B cell (primary cell): ENCODE measurements at regions of chr11 and their contacts with region 1.

Region 1: DNA sequence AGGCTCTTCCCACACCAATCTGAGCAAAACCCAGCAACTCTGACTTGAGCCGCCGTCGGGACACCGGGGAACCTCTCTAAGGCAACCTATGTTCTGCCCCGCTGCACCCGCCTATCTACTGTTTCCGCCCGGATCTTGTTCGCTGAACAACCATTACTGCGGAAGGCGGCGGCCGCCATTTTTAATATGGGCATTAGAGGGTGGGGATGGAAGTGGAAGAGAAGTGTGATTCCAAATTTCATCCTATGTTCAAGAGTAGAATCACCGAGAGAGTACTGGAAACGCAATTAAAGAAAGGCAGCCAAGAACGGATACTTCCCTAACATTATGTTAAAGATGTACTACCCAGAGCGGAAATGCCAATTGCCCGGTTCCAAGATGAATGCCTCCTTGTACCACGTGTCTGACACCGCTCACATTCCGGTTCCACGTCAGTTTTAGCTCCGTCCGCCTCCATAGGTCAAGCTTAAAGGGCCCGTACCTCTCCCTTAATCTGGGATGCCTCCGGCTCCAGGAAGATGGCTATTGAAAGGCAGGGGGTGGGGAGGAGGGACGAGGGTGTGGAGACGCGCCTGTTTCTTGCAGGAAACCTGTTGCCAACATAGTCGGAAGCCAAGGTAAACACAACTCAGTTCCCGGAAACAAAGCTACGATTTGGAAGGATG is at the start of gene DPAGT1:
- DNase-seq: peak; percentile 93
- ATAC-seq: peak; percentile 84
- H3K4me3 ChIP-seq: peak within 1 kb of the TSS; percentile 75 to 100 (median 89)
- H3K4me3 Mint-ChIP-seq: peak within 1 kb of the TSS; percentile 93
- H3K27ac ChIP-seq: peak within 1 kb of the TSS; percentile 88 to 91
- H3K27ac Mint-ChIP-seq: peak within 1 kb of the TSS; percentile 98
- H3K4me1 ChIP-seq: peaks cover 33 to 46% of the 10 kb centered on the region in 2 donors
- H3K4me1 Mint-ChIP-seq: peaks cover 61% of the 10 kb centered on the region
- H3K27me3 ChIP-seq: no peaks in the 10 kb centered on the region
- H3K27me3 Mint-ChIP-seq: no peaks in the 10 kb centered on the region
- CTCF ChIP-seq: no peak
- total RNA-seq, gene DPAGT1: 34.5 and 38.3 TPM in 2 replicates

Region 2: DNA sequence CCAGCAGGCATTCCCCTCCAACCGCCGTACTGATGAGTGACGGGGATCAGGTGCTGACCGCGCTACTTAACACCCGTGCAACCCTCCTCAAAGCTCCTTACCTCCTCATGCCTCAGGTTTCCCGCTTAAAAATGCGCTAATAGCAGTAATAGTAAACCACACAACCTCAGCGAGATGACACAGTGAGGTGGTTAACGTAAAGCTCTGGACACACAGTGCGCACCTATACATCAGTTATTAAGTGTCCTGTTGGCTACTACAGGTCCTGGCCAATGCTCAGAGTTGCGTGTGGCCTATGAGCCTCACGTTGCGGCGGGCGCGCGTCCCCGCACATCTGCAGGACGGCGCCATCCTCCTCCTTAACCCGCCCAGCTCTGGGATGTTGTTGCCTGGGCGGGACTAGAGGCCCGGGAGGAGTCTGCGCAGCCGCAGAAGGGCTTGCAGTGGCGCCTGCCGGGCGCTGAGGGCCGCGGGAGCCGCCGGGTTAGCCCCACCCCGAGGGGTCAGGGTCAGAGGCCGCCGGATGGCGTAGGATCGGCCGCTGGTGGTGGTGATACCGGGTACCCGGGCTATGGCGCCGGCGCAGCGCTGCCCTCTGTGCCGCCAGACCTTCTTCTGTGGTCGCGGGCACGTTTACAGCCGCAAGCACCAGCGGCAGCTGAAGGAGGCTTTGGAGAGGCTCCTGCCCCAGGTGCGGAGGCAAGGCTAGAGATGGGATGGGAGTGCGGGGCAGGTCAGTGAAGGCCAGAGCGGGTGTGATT is 104.1 kb before region 1 on chr11 and contains the start of gene CENATAC:
- CTCF ChIA-PET with region 1: no interaction called
- POLR2A ChIA-PET with region 1: interaction called, 4 read pairs
- intact Hi-C with region 1: loop called (anchors 1 kb)
- DNase-seq: peak; percentile 94
- ATAC-seq: peak; percentile 95
- H3K4me3 ChIP-seq: peak within 1 kb of the TSS; percentile 76 to 90 (median 82)
- H3K4me3 Mint-ChIP-seq: peak within 1 kb of the TSS; percentile 99
- H3K27ac ChIP-seq: peak within 1 kb of the TSS; percentile 52 to 77
- H3K27ac Mint-ChIP-seq: peak within 1 kb of the TSS; percentile 94
- H3K4me1 ChIP-seq: peaks cover 17 to 22% of the 10 kb centered on the region in 2 donors
- H3K4me1 Mint-ChIP-seq: peaks cover 35% of the 10 kb centered on the region
- H3K27me3 ChIP-seq: no peaks in the 10 kb centered on the region
- H3K27me3 Mint-ChIP-seq: no peaks in the 10 kb centered on the region
- CTCF ChIP-seq: no peak
- total RNA-seq, gene CENATAC: 122 and 138 TPM in 2 replicates

Region 3: DNA sequence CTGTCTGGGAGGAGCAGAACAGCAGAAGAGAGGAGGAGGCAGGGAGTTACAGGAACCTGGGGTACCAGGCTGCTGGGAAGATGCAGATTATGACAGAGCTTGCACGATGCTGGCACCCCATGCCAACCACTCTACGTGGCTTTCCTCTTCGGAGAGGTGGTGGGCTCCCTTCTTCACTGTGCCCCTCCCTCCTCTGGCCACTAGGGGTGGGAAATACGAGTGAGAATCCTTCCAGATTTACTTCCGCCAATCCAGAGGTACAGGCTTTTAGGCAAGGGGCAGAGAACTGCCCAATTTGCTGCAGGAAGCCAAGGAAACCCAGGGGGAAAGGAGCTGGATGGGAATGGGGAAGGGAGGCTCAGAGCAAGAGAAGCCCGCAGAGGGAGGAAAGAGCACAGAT is 57.2 kb before region 1 on chr11:
- CTCF ChIA-PET with region 1: no interaction called
- POLR2A ChIA-PET with region 1: interaction called, 13 read pairs
- intact Hi-C with region 1: no loop called
- DNase-seq: no peak
- ATAC-seq: no peak
- H3K4me3 ChIP-seq: no peak overlapping the region
- H3K4me3 Mint-ChIP-seq: no peak overlapping the region
- H3K27ac ChIP-seq: no peak overlapping the region
- H3K27ac Mint-ChIP-seq: no peak overlapping the region
- H3K4me1 ChIP-seq: peaks cover 0 to 2% of the 10 kb centered on the region in 2 donors
- H3K4me1 Mint-ChIP-seq: peaks cover under 1% of the 10 kb centered on the region
- H3K27me3 ChIP-seq: no peaks in the 10 kb centered on the region
- H3K27me3 Mint-ChIP-seq: no peaks in the 10 kb centered on the region
- CTCF ChIP-seq: peak; percentile 10

Region 4: GRCh38 chr11:119067371-119068222 is 34.3 kb before region 1 on chr11 and contains the start of gene VPS11:
- CTCF ChIA-PET with region 1: interaction called, 7 read pairs
- POLR2A ChIA-PET with region 1: interaction called, 10 read pairs
- intact Hi-C with region 1: loop called (anchors 1 kb)
- DNase-seq: peak; percentile 97
- ATAC-seq: peak; percentile 96
- H3K4me3 ChIP-seq: peak within 1 kb of the TSS; percentile 72 to 98 (median 96)
- H3K4me3 Mint-ChIP-seq: peak within 1 kb of the TSS; percentile 100
- H3K27ac ChIP-seq: peak within 1 kb of the TSS; percentile 88 to 92
- H3K27ac Mint-ChIP-seq: peak within 1 kb of the TSS; percentile 98
- H3K4me1 ChIP-seq: peaks cover 15 to 28% of the 10 kb centered on the region in 2 donors
- H3K4me1 Mint-ChIP-seq: peaks cover 38% of the 10 kb centered on the region
- H3K27me3 ChIP-seq: no peaks in the 10 kb centered on the region
- H3K27me3 Mint-ChIP-seq: no peaks in the 10 kb centered on the region
- CTCF ChIP-seq: no peak
- total RNA-seq, gene VPS11: 64.7 and 71.1 TPM in 2 replicates

Region 5: DNA sequence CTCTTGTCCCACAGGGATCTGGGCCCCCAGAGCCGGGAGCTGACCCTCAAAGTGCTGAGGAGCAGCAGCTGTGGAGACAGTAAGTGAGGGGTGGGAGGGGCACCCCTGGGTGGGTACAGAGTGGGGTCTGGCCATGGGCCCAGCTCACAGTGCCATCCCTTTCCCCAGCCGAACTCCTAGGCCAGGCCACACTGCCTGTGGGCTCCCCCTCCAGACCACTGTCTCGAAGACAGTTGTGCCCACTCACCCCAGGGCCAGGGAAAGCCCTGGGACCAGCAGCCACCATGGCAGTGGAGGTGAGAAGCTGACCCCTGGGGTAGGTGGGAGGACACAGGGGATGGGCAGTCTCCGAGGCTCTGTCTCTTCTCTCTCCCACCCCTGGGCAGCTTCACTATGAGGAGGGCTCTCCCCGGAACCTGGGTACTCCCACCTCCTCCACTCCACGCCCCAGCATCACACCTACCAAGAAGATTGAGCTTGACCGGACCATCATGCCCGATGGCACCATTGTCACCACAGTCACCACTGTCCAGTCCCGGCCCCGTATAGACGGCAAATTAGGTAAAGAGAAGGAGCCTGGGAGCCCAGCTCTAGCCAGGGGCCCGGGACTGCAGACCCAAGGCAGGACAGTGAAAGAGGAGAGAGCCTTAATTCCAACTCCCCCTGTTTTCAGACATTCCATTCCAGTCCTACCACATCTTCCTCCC is 10.6 kb after region 1 on chr11:
- CTCF ChIA-PET with region 1: no interaction called
- POLR2A ChIA-PET with region 1: interaction called, 14 read pairs
- intact Hi-C with region 1: no loop called
- DNase-seq: no peak
- ATAC-seq: no peak
- H3K4me3 ChIP-seq: no peak overlapping the region
- H3K4me3 Mint-ChIP-seq: no peak overlapping the region
- H3K27ac ChIP-seq: no peak overlapping the region
- H3K27ac Mint-ChIP-seq: no peak overlapping the region
- H3K4me1 ChIP-seq: peaks cover 12 to 27% of the 10 kb centered on the region in 2 donors
- H3K4me1 Mint-ChIP-seq: peaks cover 25% of the 10 kb centered on the region
- H3K27me3 ChIP-seq: no peaks in the 10 kb centered on the region
- H3K27me3 Mint-ChIP-seq: no peaks in the 10 kb centered on the region
- CTCF ChIP-seq: no peak

Region 6: DNA sequence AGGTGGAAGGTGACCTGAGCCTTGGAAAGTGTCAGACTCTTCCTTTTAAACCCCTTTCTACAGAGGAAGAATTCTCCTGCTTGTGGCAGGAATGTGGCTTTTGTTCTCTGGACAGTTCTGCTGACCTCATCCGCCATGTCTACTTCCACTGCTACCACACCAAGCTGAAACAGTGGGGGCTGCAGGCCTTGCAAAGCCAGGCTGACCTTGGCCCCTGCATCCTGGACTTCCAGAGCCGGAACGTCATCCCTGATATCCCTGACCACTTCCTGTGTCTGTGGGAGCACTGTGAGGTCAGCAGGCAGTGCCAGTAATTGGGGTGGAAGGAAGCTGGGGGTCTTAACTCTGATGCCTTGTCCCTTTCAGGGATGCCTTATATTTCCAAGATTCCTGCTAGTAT is 28.8 kb after region 1 on chr11:
- CTCF ChIA-PET with region 1: no interaction called
- POLR2A ChIA-PET with region 1: no interaction called
- intact Hi-C with region 1: no loop called
- DNase-seq: no peak
- ATAC-seq: no peak
- H3K4me3 ChIP-seq: no peak overlapping the region
- H3K4me3 Mint-ChIP-seq: no peak overlapping the region
- H3K27ac ChIP-seq: no peak overlapping the region
- H3K27ac Mint-ChIP-seq: no peak overlapping the region
- H3K4me1 ChIP-seq: no peaks in the 10 kb centered on the region
- H3K4me1 Mint-ChIP-seq: peaks cover 5% of the 10 kb centered on the region
- H3K27me3 ChIP-seq: no peaks in the 10 kb centered on the region
- H3K27me3 Mint-ChIP-seq: no peaks in the 10 kb centered on the region
- CTCF ChIP-seq: no peak